ENCODE measurements at regions of chr12 and their contacts with region 1.

Region 1: DNA sequence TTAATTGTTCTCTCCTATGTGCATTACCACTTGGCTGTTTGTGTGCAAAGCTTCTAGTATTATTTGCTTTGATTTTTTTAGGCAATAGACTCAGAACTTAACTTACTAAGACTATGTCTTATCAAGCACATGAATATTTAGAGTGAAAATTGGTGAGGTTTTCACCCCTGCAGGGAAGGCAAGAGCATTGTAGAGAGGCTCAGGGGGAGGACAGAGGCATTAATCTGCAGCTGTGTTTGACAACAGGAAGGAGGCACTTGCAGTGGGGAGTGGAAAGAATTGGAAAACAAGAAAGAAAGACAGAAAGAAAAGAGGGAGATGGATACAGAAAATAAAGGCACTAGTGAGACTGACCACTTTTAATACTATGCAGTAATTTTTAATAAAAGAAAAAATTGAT is 431.6 kb downstream of the PDZRN4 start:
- DNase-seq: no peak
- H3K4me3 ChIP-seq: no peak overlapping the region
- H3K27ac ChIP-seq: no peak overlapping the region
- H3K4me1 ChIP-seq: no peaks in the 10 kb centered on the region
- CTCF ChIP-seq: no peak

Region 2: GRCh38 chr12:41367726-41368405 is 251.8 kb before region 1 on chr12:
- CTCF ChIA-PET with region 1: no interaction called
- POLR2A ChIA-PET with region 1: no interaction called
- intact Hi-C with region 1: loop called (anchors 1 kb)
- DNase-seq: peak; percentile 54
- H3K4me3 ChIP-seq: no peak overlapping the region
- H3K27ac ChIP-seq: no peak overlapping the region
- H3K4me1 ChIP-seq: no peaks in the 10 kb centered on the region
- CTCF ChIP-seq: peak; percentile 86

Region 3: DNA sequence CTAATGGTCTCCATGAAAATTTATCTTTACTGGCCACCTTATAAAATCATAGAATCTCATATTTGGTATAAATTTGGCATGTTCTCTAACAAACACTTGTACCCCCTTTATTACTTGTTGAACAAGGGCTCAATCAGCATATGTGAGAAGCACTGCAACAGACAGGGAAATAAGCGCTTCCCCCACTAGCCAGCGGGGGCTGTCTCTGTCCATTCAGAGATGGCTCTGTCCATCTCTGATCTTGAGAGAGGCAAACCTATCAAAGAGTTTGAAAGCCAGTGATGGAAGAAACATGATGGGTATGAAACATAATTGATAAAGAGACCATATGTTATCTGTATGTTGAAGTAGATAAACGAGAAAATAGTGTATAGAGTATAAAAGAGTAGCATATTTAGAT is 104.8 kb before region 1 on chr12:
- CTCF ChIA-PET with region 1: no interaction called
- POLR2A ChIA-PET with region 1: no interaction called
- intact Hi-C with region 1: no loop called
- DNase-seq: peak; percentile 24
- H3K4me3 ChIP-seq: no peak overlapping the region
- H3K27ac ChIP-seq: no peak overlapping the region
- H3K4me1 ChIP-seq: peaks cover 25% of the 10 kb centered on the region
- CTCF ChIP-seq: peak; percentile 69

Region 4: GRCh38 chr12:41589878-41590277 is 29.8 kb before region 1 on chr12:
- CTCF ChIA-PET with region 1: no interaction called
- POLR2A ChIA-PET with region 1: no interaction called
- intact Hi-C with region 1: no loop called
- DNase-seq: no peak
- H3K4me3 ChIP-seq: no peak overlapping the region
- H3K27ac ChIP-seq: no peak overlapping the region
- H3K4me1 ChIP-seq: no peaks in the 10 kb centered on the region
- CTCF ChIP-seq: no peak

Region 5: GRCh38 chr12:41731061-41731460 is 111.4 kb after region 1 on chr12:
- CTCF ChIA-PET with region 1: no interaction called
- POLR2A ChIA-PET with region 1: no interaction called
- intact Hi-C with region 1: no loop called
- DNase-seq: no peak
- H3K4me3 ChIP-seq: no peak overlapping the region
- H3K27ac ChIP-seq: no peak overlapping the region
- H3K4me1 ChIP-seq: no peaks in the 10 kb centered on the region
- CTCF ChIP-seq: no peak

Measured in OCI-LY7 (cell line).